ENCODE measurements at regions of chr17 and their contacts with region 1.

Region 1: GRCh38 chr17:78360371-78361224 is 721 bp upstream of the SOCS3 start:
- DNase-seq: peak; percentile 80
- ATAC-seq: peak; percentile 43
- H3K4me3 ChIP-seq: peak overlapping the region; percentile 38
- H3K27ac ChIP-seq: peak overlapping the region; percentile 75
- H3K4me1 ChIP-seq: peaks cover 13% of the 10 kb centered on the region
- H3K27me3 ChIP-seq: no peaks in the 10 kb centered on the region
- CTCF ChIP-seq: peak; percentile 90
- POLR2A ChIP-seq: no peak; the same call in 1 of the 2 replicates
- RAD21 ChIP-seq: peak; percentile 91

Region 2: DNA sequence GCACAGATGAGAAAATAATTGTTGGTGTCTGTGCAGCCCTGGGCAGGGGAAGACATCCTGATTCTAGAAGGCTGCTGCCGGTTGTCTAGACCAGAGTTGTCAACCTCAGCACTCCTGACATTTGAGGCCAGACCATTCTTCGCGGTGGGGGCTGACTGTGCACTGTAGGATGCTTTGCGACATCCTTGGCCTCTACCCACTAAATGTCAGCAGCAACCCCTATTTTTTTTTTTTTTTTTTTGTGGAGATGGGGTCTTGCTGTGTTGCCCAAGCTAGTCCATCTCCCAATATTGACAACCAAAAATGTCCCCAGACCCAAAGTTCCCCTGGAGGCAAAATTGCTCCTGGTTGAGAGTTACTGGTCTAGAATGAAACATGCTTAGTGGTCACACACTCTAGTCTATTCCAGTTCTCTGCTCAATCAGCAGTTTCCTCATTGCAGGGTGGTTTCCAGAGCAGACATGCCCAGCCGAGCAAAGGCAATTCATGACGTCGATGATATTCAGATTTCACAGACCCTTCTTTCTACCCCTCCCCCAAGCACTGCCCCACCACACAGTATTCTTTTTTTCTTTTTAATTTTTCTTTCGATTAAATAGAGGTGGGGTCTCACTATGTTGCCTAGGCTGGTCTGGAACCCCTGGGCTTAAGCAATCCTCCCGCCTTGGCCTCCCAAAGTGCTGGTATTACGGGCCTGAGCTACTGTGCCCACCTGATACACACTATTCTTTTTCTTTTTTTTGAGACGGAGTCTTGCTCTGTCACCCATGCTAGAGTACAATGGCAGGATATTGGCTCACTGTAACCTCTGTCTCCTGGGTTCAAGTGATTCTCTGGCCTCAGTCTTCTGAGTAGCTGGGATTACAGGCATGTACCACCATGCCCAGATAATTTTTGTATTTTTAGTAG is 205.4 kb before region 1 on chr17:
- CTCF ChIA-PET with region 1: no interaction called
- POLR2A ChIA-PET with region 1: no interaction called
- dilution Hi-C with region 1: no loop called
- in situ Hi-C with region 1: no loop called
- intact Hi-C with region 1: no loop called
- DNase-seq: no peak
- ATAC-seq: no peak
- H3K4me3 ChIP-seq: no peak overlapping the region
- H3K27ac ChIP-seq: no peak overlapping the region
- H3K4me1 ChIP-seq: no peaks in the 10 kb centered on the region
- H3K27me3 ChIP-seq: no peaks in the 10 kb centered on the region
- CTCF ChIP-seq: no peak
- POLR2A ChIP-seq: no peak
- RAD21 ChIP-seq: no peak

Region 3: DNA sequence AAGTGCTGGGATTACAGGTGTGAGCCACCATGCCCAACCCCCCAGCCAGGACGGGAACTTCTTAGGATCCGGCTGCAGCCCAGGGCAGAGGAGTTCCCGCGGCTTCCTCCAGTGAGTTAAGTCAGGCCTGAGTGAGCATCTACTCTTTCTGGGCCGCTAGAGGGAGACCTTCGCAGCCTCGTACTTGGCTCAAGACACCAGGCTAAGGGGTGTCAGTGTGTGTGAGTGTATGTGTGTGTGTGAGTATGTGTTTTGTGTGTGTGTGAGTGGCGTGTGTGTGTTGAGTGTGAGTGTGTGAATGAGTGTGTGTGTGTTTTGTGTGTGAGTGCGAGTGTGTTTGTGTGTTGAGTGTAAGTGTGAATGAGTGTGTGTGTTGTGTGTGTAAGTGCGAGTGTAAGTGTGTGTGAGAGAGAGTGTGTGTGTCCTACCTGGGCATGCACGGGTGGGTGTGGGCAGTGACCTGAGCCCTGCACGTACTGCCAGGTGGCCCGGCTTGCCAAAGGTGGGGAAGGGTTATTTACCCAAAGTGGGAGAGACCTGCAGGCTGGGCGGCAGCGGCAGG is 70.7 kb before region 1 on chr17:
- CTCF ChIA-PET with region 1: interaction called, 5 read pairs
- POLR2A ChIA-PET with region 1: interaction called, 3 read pairs
- dilution Hi-C with region 1: no loop called
- in situ Hi-C with region 1: loop called (anchors 5 kb)
- intact Hi-C with region 1: loop called (anchors 1 kb)
- DNase-seq: peak; percentile 92
- ATAC-seq: peak; percentile 100
- H3K4me3 ChIP-seq: no peak overlapping the region
- H3K27ac ChIP-seq: no peak overlapping the region
- H3K4me1 ChIP-seq: peaks cover 3% of the 10 kb centered on the region; the same call in 1 of the 2 replicates
- H3K27me3 ChIP-seq: no peaks in the 10 kb centered on the region
- CTCF ChIP-seq: peak; percentile 83
- POLR2A ChIP-seq: 0 out of 2 replicates have a peak, but pooled peaks have one; percentile 37
- RAD21 ChIP-seq: peak; percentile 95

Region 4: DNA sequence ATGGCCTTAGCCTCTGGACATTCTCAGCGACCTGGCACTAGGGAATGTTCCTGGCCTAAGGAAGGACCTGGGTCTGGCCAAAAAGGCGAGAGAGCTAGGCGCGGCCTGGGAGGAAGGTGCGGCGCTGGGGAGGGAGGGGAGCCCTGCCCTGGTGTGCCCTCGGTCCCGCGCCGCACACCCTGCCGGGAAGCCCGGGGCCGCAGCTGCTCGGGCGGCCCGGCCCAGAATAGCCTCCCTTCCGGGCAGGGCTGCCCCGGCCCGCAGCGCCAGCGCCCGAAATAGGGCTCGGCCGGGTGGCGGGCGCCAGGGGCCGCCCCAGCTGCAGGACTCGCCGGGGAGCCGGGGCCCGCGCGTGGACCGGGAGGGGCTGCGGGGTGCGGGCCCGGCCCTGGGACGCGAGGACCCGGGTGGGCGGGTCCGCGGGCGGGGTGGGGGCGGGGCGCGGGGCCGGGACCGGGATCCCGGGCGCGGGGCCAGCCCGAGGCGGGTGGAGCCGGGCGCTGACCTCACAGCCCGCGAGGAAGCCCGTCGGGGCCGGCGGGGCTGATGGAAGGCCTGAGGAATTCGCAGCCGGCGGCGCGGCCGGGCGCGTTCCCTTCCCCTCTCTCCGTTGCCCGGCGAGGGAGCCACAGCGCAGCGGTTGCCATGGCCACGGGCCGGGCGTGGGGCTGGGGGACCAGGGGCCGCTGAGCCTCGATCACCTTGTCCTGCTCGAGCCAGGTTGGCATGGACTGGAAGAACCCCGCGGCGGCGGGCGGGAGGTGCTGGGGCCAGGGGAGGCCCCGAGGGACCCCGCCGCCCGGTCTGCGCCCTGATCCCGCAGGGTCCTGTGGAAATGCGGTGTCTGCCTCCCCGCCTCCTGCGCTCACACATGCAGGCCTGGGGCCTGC is 18.8 kb before region 1 on chr17:
- CTCF ChIA-PET with region 1: no interaction called
- POLR2A ChIA-PET with region 1: interaction called, 28 read pairs
- dilution Hi-C with region 1: no loop called
- in situ Hi-C with region 1: no loop called
- intact Hi-C with region 1: loop called (anchors 2 kb)
- DNase-seq: peak; percentile 74
- ATAC-seq: peak; percentile 73
- H3K4me3 ChIP-seq: peak overlapping the region; percentile 6
- H3K27ac ChIP-seq: peak overlapping the region; percentile 99
- H3K4me1 ChIP-seq: peaks cover 30% of the 10 kb centered on the region
- H3K27me3 ChIP-seq: no peaks in the 10 kb centered on the region
- CTCF ChIP-seq: 0 out of 2 replicates have a peak, but pooled peaks have one; percentile 6
- POLR2A ChIP-seq: no peak; the same call in 1 of the 2 replicates
- RAD21 ChIP-seq: peak; percentile 9; the same call in 1 of the 2 replicates

Region 5: GRCh38 chr17:78390241-78391050 is 29.8 kb after region 1 on chr17:
- CTCF ChIA-PET with region 1: interaction called, 7 read pairs
- POLR2A ChIA-PET with region 1: no interaction called
- dilution Hi-C with region 1: no loop called
- in situ Hi-C with region 1: no loop called
- intact Hi-C with region 1: loop called (anchors 1 kb)
- DNase-seq: peak; percentile 100
- ATAC-seq: peak; percentile 72
- H3K4me3 ChIP-seq: no peak overlapping the region
- H3K27ac ChIP-seq: peak overlapping the region; percentile 82
- H3K4me1 ChIP-seq: peaks cover 43% of the 10 kb centered on the region
- H3K27me3 ChIP-seq: no peaks in the 10 kb centered on the region
- CTCF ChIP-seq: peak; percentile 24; the same call in 1 of the 2 replicates
- POLR2A ChIP-seq: peak; percentile 42; the same call in 1 of the 2 replicates
- RAD21 ChIP-seq: peak; percentile 42; the same call in 1 of the 2 replicates

Region 6: GRCh38 chr17:78708510-78708973 is 347.9 kb after region 1 on chr17:
- CTCF ChIA-PET with region 1: no interaction called
- POLR2A ChIA-PET with region 1: no interaction called
- dilution Hi-C with region 1: no loop called
- in situ Hi-C with region 1: no loop called
- intact Hi-C with region 1: loop called (anchors 2 kb)
- DNase-seq: peak; percentile 83
- ATAC-seq: peak; percentile 98
- H3K4me3 ChIP-seq: no peak overlapping the region
- H3K27ac ChIP-seq: no peak overlapping the region
- H3K4me1 ChIP-seq: peaks cover 4% of the 10 kb centered on the region; the same call in 1 of the 2 replicates
- H3K27me3 ChIP-seq: no peaks in the 10 kb centered on the region
- CTCF ChIP-seq: peak; percentile 93
- POLR2A ChIP-seq: no peak
- RAD21 ChIP-seq: peak; percentile 99

Measured in IMR-90 (cell line).